ENCODE measurements at regions of chr6 and their contacts with region 1.

Region 1: GRCh38 chr6:13407709-13408695 is 79.4 kb downstream of the GFOD1 start:
- DNase-seq: no peak
- ATAC-seq: peak; percentile 16 to 76 (median 63)
- H3K4me3 ChIP-seq: no peak overlapping the region
- H3K27ac ChIP-seq: peak overlapping the region; percentile 66
- H3K4me1 ChIP-seq: peaks cover 88% of the 10 kb centered on the region
- H3K27me3 ChIP-seq: no peaks in the 10 kb centered on the region
- CTCF ChIP-seq: no peak

Region 2: GRCh38 chr6:13355043-13355951 is 52.7 kb before region 1 on chr6:
- intact Hi-C with region 1: loop called in 1 of 2 experiments (anchors 10 kb)
- DNase-seq: no peak
- ATAC-seq: peak; percentile 48 to 79 (median 64)
- H3K4me3 ChIP-seq: no peak overlapping the region
- H3K27ac ChIP-seq: peak overlapping the region; percentile 27
- H3K4me1 ChIP-seq: peaks cover 10% of the 10 kb centered on the region
- H3K27me3 ChIP-seq: no peaks in the 10 kb centered on the region
- CTCF ChIP-seq: no peak

Measured in psoas muscle (tissue), 8 donors.